ENCODE measurements at regions of chr16 and their contacts with region 1.

Region 1: GRCh38 chr16:21523411-21524067 is 75.8 kb upstream of the METTL9 start:
- DNase-seq: no peak
- H3K4me3 ChIP-seq: no peak overlapping the region
- H3K4me3 Mint-ChIP-seq: no peak overlapping the region
- H3K27ac ChIP-seq: no peak overlapping the region
- H3K27ac Mint-ChIP-seq: peak overlapping the region in 2 of 7 donors; percentile 22 to 31
- H3K4me1 ChIP-seq: no peaks in the 10 kb centered on the region
- H3K4me1 Mint-ChIP-seq: peaks cover 0 to 17% (median 4%) of the 10 kb centered on the region in 4 donors
- H3K27me3 ChIP-seq: no peaks in the 10 kb centered on the region
- H3K27me3 Mint-ChIP-seq: no peaks in the 10 kb centered on the region

Region 2: GRCh38 chr16:21501909-21502667 is 21.5 kb before region 1 on chr16:
- CTCF ChIA-PET with region 1: no interaction called
- POLR2A ChIA-PET with region 1: interaction called, 15 read pairs
- intact Hi-C with region 1: no loop called
- DNase-seq: peak; percentile 91 to 96 (median 93)
- H3K4me3 ChIP-seq: peak overlapping the region; percentile 65 to 70
- H3K4me3 Mint-ChIP-seq: peak overlapping the region; percentile 84 to 91 (median 86)
- H3K27ac ChIP-seq: peak overlapping the region; percentile 92
- H3K27ac Mint-ChIP-seq: peak overlapping the region; percentile 86 to 95 (median 93)
- H3K4me1 ChIP-seq: peaks cover 21% of the 10 kb centered on the region
- H3K4me1 Mint-ChIP-seq: peaks cover 6 to 27% (median 13%) of the 10 kb centered on the region in 4 donors
- H3K27me3 ChIP-seq: no peaks in the 10 kb centered on the region
- H3K27me3 Mint-ChIP-seq: no peaks in the 10 kb centered on the region

Region 3: DNA sequence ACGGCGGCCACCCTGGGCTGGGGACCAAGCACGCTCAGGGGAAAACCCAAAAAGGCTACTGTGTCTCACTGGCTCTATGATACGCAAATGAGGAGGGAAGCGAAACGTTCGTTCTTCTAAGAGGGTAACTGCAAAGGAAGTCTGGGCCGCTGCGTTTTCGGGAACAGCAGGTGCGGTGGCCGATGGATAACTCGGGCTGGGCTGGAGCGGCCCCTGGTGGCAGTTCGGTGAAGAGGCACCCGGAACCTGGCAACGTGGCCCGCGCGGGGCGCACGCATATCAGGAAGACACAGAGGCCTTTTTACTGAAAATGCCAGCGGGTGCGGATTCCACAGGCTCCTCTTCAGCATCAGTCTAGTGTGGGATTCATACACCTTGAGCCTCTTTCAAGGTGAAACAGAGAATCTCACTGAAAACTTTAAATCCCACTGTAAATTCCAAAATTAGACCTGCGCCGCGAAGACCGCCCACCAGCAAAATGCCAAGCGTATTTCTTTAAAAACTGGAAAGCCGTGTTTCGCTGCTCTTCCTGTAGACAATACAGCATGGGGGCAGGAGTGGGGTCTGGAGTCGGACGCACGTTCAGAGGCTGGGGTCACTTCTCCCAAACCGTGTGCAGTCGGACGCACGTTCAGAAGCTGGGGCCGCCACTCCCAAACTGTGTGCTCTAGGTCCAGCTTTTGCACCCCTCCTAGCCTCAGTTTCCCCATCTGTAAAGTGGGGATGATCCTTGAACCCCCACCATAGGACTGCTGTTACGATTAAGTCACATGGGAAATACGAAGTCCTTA is 31.5 kb after region 1 on chr16:
- CTCF ChIA-PET with region 1: no interaction called
- POLR2A ChIA-PET with region 1: no interaction called
- intact Hi-C with region 1: loop called (anchors 1 kb)
- DNase-seq: peak; percentile 84 to 88 (median 87)
- H3K4me3 ChIP-seq: no peak overlapping the region
- H3K4me3 Mint-ChIP-seq: peak overlapping the region; percentile 53 to 87 (median 75)
- H3K27ac ChIP-seq: no peak overlapping the region
- H3K27ac Mint-ChIP-seq: peak overlapping the region in 6 of 7 donors; percentile 9 to 75 (median 51)
- H3K4me1 ChIP-seq: peaks cover 9% of the 10 kb centered on the region
- H3K4me1 Mint-ChIP-seq: peaks cover 3 to 12% (median 6%) of the 10 kb centered on the region in 4 donors
- H3K27me3 ChIP-seq: no peaks in the 10 kb centered on the region
- H3K27me3 Mint-ChIP-seq: peaks cover 0 to 5% of the 10 kb centered on the region in 2 donors

Region 4: GRCh38 chr16:21608639-21609328 is 85.2 kb after region 1 on chr16:
- CTCF ChIA-PET with region 1: no interaction called
- POLR2A ChIA-PET with region 1: no interaction called
- intact Hi-C with region 1: no loop called
- DNase-seq: peak in 2 of 5 donors; percentile 14 to 38
- H3K4me3 ChIP-seq: no peak overlapping the region
- H3K4me3 Mint-ChIP-seq: peak overlapping the region in 6 of 8 donors; percentile 13 to 59 (median 41)
- H3K27ac ChIP-seq: no peak overlapping the region
- H3K27ac Mint-ChIP-seq: peak overlapping the region in 3 of 7 donors; percentile 11 to 53 (median 42)
- H3K4me1 ChIP-seq: peaks cover 84% of the 10 kb centered on the region
- H3K4me1 Mint-ChIP-seq: peaks cover 51 to 86% (median 65%) of the 10 kb centered on the region in 4 donors
- H3K27me3 ChIP-seq: no peaks in the 10 kb centered on the region
- H3K27me3 Mint-ChIP-seq: no peaks in the 10 kb centered on the region